K562 (cell line): ENCODE measurements at regions of chr2 and their contacts with region 1.

Region 1: GRCh38 chr2:188199716-188200131 is 92.0 kb upstream of the GULP1 start:
- DNase-seq: no peak
- ATAC-seq: no peak
- H3K4me3 ChIP-seq: no peak overlapping the region
- H3K27ac ChIP-seq: no peak overlapping the region
- H3K4me1 ChIP-seq: no peaks in the 10 kb centered on the region
- H3K27me3 ChIP-seq: no peaks in the 10 kb centered on the region
- CTCF ChIP-seq: no peak
- EP300 ChIP-seq: no peak
- POLR2A ChIP-seq: no peak
- RAD21 ChIP-seq: no peak

Region 2: DNA sequence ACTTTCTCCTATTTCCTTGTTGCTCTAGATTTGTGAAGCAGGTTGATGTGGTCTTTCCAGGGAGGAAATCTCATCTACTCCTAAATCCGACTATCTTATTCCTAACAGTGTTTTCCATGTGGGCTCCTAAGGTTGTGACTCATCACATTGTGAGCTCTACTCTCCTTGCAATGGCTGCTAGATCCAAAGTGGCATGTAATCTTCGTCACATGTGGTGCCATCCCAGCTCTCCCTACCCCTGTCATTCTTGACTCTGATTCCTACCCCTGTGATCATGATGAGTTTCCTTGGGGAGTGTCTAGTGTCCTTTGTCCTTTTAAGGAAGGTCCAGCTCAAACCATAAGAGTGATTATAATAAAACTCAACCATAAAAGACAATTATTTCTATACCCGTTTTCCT is 44.7 kb after region 1 on chr2:
- CTCF ChIA-PET with region 1: no interaction called
- POLR2A ChIA-PET with region 1: no interaction called
- in situ Hi-C with region 1: no loop called
- intact Hi-C with region 1: no loop called
- DNase-seq: no peak
- ATAC-seq: no peak
- H3K4me3 ChIP-seq: no peak overlapping the region
- H3K27ac ChIP-seq: no peak overlapping the region
- H3K4me1 ChIP-seq: no peaks in the 10 kb centered on the region
- H3K27me3 ChIP-seq: no peaks in the 10 kb centered on the region
- CTCF ChIP-seq: no peak
- EP300 ChIP-seq: no peak
- POLR2A ChIP-seq: no peak
- RAD21 ChIP-seq: no peak

Region 3: GRCh38 chr2:188369365-188369764 is 169.6 kb after region 1 on chr2:
- CTCF ChIA-PET with region 1: interaction called, 3 read pairs
- POLR2A ChIA-PET with region 1: no interaction called
- in situ Hi-C with region 1: no loop called
- intact Hi-C with region 1: loop called (anchors 10 kb)
- DNase-seq: peak; percentile 11 to 66 (median 32)
- ATAC-seq: peak; percentile 96
- H3K4me3 ChIP-seq: no peak overlapping the region
- H3K27ac ChIP-seq: no peak overlapping the region
- H3K4me1 ChIP-seq: no peaks in the 10 kb centered on the region
- H3K27me3 ChIP-seq: no peaks in the 10 kb centered on the region
- CTCF ChIP-seq: peak; percentile 60 to 77 (median 75)
- EP300 ChIP-seq: no peak
- POLR2A ChIP-seq: no peak
- RAD21 ChIP-seq: peak; percentile 52 to 74